ENCODE measurements at regions of chr20 and their contacts with region 1.

Region 1: GRCh38 chr20:1535420-1536175 is 21.9 kb downstream of the SIRPD start:
- DNase-seq: no peak
- H3K4me3 ChIP-seq: no peak overlapping the region
- H3K27ac ChIP-seq: no peak overlapping the region
- H3K4me1 ChIP-seq: no peaks in the 10 kb centered on the region
- H3K27me3 ChIP-seq: no peaks in the 10 kb centered on the region; the same call in 1 of the 2 replicates

Region 2: GRCh38 chr20:1631309-1632151 is 95.9 kb after region 1 on chr20:
- in situ Hi-C with region 1: loop called (anchors 25 kb)
- DNase-seq: peak; percentile 71
- H3K4me3 ChIP-seq: no peak overlapping the region
- H3K27ac ChIP-seq: no peak overlapping the region
- H3K4me1 ChIP-seq: peaks cover 17% of the 10 kb centered on the region
- H3K27me3 ChIP-seq: peaks cover 4% of the 10 kb centered on the region; the same call in 1 of the 2 replicates

Measured in GM23248 (cell line).